ENCODE measurements at regions of chr4 and their contacts with region 1.

Region 1: GRCh38 chr4:97491856-97492255 is 651.4 kb downstream of the STPG2 start:
- DNase-seq: no peak
- H3K4me3 Mint-ChIP-seq: no peak overlapping the region
- H3K27ac Mint-ChIP-seq: no peak overlapping the region
- H3K4me1 Mint-ChIP-seq: peaks cover 28% of the 10 kb centered on the region
- H3K27me3 Mint-ChIP-seq: no peaks in the 10 kb centered on the region
- CTCF ChIP-seq: no peak

Region 2: DNA sequence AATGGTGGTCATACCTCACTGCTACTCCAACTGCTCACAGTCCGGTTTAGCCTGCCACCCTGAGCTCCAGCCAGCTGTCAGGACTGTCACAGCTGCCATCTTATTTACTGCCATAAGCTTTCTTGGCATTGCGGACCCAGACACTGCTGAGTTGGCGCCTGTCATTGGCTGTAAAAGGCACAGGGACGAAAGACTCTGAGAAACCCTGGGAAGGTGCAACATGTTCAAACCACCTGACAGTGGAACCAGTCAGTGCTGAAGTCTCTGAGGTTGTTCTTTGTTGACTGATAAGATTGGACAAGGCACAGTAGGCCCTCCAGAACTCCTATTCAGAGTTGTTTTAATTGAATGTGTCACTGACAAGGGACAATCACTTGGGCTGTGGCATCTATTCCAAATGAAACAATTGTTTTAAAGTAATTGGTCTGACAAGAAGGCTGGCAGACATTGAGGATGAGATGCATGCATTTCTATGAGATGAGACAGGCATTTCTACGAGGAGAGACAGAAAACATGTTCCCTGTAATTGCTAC is 276.4 kb before region 1 on chr4:
- CTCF ChIA-PET with region 1: no interaction called
- POLR2A ChIA-PET with region 1: no interaction called
- intact Hi-C with region 1: no loop called
- DNase-seq: no peak
- H3K4me3 Mint-ChIP-seq: no peak overlapping the region
- H3K27ac Mint-ChIP-seq: no peak overlapping the region
- H3K4me1 Mint-ChIP-seq: no peaks in the 10 kb centered on the region
- H3K27me3 Mint-ChIP-seq: no peaks in the 10 kb centered on the region
- CTCF ChIP-seq: no peak

Region 3: GRCh38 chr4:97457253-97457652 is 34.6 kb before region 1 on chr4:
- CTCF ChIA-PET with region 1: no interaction called
- POLR2A ChIA-PET with region 1: no interaction called
- intact Hi-C with region 1: loop called (anchors 1 kb)
- DNase-seq: no peak
- H3K4me3 Mint-ChIP-seq: no peak overlapping the region
- H3K27ac Mint-ChIP-seq: no peak overlapping the region
- H3K4me1 Mint-ChIP-seq: no peaks in the 10 kb centered on the region
- H3K27me3 Mint-ChIP-seq: no peaks in the 10 kb centered on the region
- CTCF ChIP-seq: no peak

Region 4: DNA sequence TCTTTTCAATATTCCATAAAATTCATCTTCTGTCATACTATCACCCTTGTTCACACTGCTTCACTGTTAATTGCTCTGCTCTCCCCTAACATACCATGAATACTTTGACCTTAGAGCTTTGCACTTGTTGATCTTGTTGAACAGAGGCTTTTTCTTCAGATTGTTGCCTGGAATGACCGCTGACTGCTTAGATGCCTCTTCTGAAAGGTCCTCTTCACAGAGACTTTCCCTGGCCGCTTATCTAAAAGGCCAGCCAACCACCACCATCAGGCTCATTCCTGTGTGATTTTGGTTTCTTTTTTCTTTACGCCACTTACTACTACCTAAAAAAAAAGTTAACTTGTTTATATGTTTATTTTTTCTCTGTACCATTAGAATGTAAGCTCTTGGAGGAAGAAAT is 16.2 kb before region 1 on chr4:
- CTCF ChIA-PET with region 1: no interaction called
- POLR2A ChIA-PET with region 1: no interaction called
- intact Hi-C with region 1: no loop called
- DNase-seq: no peak
- H3K4me3 Mint-ChIP-seq: no peak overlapping the region
- H3K27ac Mint-ChIP-seq: no peak overlapping the region
- H3K4me1 Mint-ChIP-seq: no peaks in the 10 kb centered on the region
- H3K27me3 Mint-ChIP-seq: no peaks in the 10 kb centered on the region
- CTCF ChIP-seq: no peak